Left lung (tissue), 14 donors: ENCODE measurements at regions of chr16 and their contacts with region 1.

Region 1: DNA sequence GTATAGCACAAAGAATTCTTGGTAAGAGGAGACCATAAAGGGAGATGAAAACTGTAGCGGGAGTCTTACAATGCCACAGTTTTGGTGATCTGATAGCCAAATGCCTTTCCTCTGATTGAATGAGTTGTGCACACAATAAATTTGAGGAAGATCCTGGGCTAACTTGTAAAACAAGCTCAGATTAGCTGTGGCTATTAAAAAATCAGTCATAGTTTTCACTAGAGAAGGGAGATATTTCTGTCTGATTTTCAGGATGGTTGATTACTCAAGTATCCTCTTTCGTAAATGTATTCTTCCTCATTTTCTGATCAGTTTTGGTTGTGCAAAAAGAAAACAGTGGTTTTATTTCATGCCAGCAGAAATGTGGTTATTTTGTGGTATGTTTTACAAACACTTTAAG is 9.1 kb upstream of the METTL9 start:
- DNase-seq: no peak
- ATAC-seq: peak; percentile 39
- H3K4me3 ChIP-seq: no peak overlapping the region
- H3K27ac ChIP-seq: peak overlapping the region in 1 of 2 donors; percentile 74
- H3K4me1 ChIP-seq: peaks cover 0 to 49% of the 10 kb centered on the region in 2 donors
- H3K27me3 ChIP-seq: no peaks in the 10 kb centered on the region
- CTCF ChIP-seq: no peak

Region 2: GRCh38 chr16:21263640-21264570 is 326.4 kb before region 1 on chr16:
- intact Hi-C with region 1: no loop called
- DNase-seq: peak in 2 of 4 donors; percentile 75 to 78
- ATAC-seq: no peak
- H3K4me3 ChIP-seq: no peak overlapping the region
- H3K27ac ChIP-seq: no peak overlapping the region
- H3K4me1 ChIP-seq: no peaks in the 10 kb centered on the region
- H3K27me3 ChIP-seq: no peaks in the 10 kb centered on the region
- CTCF ChIP-seq: no peak

Region 3: DNA sequence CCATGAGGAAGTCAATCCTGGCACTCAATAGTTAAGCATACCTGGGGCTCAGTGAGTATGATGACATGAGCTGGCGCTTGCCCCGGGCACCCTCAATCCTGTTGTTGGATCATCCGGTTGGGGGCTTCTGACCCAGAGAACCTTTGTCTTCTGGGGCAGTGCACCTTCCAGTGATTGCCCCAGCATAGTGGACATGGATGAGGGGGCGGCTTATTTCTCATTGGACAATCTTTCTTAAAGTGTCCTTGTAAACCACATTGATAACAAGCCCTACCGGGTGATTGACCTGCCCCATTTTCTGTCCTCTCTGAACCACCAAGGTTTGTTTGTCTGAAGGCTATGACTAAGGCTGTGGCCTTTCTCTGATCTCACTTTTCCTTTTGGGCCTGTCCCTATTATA is 43.9 kb after region 1 on chr16:
- intact Hi-C with region 1: loop called in 1 of 2 experiments (anchors 5 kb)
- DNase-seq: no peak
- ATAC-seq: no peak
- H3K4me3 ChIP-seq: no peak overlapping the region
- H3K27ac ChIP-seq: no peak overlapping the region
- H3K4me1 ChIP-seq: peaks cover 0 to 44% of the 10 kb centered on the region in 2 donors
- H3K27me3 ChIP-seq: no peaks in the 10 kb centered on the region
- CTCF ChIP-seq: no peak

Region 4: DNA sequence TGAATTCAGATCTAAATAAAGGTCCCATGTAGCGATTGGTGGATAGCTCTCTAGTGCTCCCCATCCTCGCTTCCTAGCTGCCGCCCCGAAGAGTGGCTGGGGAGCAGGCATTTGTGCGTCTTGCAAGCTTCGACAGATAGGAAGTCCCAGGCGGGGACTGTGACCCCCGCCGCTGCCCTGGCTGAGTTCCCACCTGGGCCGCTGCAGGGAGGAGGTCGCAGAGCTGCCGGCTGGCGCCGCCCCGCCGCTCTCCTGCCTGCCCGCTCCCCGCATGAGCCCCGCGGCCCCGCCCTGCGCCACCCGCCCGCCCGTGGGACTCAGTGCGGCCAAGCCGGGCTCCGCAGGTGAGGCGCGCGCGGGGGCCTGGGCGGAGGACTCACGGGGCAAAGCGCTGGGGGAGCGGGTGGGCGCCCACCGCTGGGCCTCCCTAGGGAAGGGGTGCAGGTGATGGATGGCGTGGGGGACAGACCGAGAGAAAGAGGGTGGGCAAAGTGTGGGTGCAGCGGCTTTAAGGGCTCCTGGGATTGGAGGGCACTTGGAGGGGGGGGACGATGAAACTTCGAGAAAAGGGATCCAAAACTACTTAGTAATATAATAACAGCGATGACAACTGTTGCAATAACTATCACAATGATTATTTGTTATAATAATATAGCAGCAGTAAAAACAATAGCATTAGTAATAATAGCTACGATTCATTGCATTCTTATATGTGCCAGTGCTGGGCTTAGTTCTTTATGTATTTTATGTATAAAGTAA is 73.8 kb after region 1 on chr16 and contains the start of gene OTOA:
- intact Hi-C with region 1: no loop called
- DNase-seq: peak in 1 of 4 donors; percentile 83
- ATAC-seq: peak; percentile 61
- H3K4me3 ChIP-seq: no peak within 1 kb of the TSS
- H3K27ac ChIP-seq: no peak within 1 kb of the TSS
- H3K4me1 ChIP-seq: peaks cover 3 to 6% of the 10 kb centered on the region in 2 donors
- H3K27me3 ChIP-seq: peaks cover 10 to 45% of the 10 kb centered on the region in 2 donors
- CTCF ChIP-seq: no peak
- polyA plus RNA-seq, gene OTOA: 0.06 to 0.14 (median 0.07) TPM in 5 of 6 donors, not detected in the other